ENCODE measurements at regions of chr20 and their contacts with region 1.

Region 1: DNA sequence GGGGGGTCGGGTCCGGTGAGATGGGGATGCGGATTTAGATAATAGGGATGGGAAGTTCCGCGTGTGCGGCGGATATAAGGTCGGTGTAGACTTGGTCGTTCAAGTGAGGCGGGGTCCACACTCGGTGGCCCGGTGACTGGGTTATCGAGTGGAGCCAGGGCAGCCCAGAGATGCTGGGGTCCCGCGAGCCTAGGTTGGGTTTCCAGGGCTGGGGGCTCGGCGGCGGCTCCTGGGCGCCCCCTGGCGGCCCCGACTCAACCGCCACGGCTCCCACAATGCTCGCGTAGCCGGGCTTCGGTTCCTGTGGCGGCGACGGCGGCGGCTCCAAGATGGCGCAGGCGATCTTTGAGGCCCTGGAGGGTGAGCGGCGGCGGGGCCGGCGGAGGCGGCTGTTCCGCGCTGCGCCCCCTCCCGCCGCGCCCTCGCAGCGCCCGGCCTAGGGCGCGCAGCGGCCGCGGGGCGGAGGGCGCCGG is at the start of gene ZNF341:
- DNase-seq: peak; percentile 81 to 95 (median 89)
- ATAC-seq: peak; percentile 85
- H3K4me3 ChIP-seq: peak within 1 kb of the TSS; percentile 67 to 79
- H3K4me3 Mint-ChIP-seq: peak within 1 kb of the TSS; percentile 88
- H3K27ac ChIP-seq: peak within 1 kb of the TSS; percentile 60 to 81
- H3K27ac Mint-ChIP-seq: peak within 1 kb of the TSS; percentile 92
- H3K4me1 ChIP-seq: peaks cover 12% of the 10 kb centered on the region
- H3K4me1 Mint-ChIP-seq: peaks cover 20% of the 10 kb centered on the region
- H3K27me3 ChIP-seq: no peaks in the 10 kb centered on the region
- H3K27me3 Mint-ChIP-seq: no peaks in the 10 kb centered on the region
- CTCF ChIP-seq: peak; percentile 67
- total RNA-seq, gene ZNF341: 2.4 to 2.9 TPM

Region 2: GRCh38 chr20:33401184-33401920 is 330.4 kb before region 1 on chr20 and contains the start of gene CDK5RAP1:
- CTCF ChIA-PET with region 1: no interaction called
- POLR2A ChIA-PET with region 1: no interaction called
- intact Hi-C with region 1: loop called (anchors 1 to 5 kb)
- DNase-seq: peak; percentile 71 to 93 (median 85)
- ATAC-seq: peak; percentile 96
- H3K4me3 ChIP-seq: peak within 1 kb of the TSS; percentile 66 to 67
- H3K4me3 Mint-ChIP-seq: peak within 1 kb of the TSS; percentile 97
- H3K27ac ChIP-seq: peak within 1 kb of the TSS; percentile 56 to 64
- H3K27ac Mint-ChIP-seq: peak within 1 kb of the TSS; percentile 93
- H3K4me1 ChIP-seq: peaks cover 26% of the 10 kb centered on the region
- H3K4me1 Mint-ChIP-seq: peaks cover 55% of the 10 kb centered on the region
- H3K27me3 ChIP-seq: no peaks in the 10 kb centered on the region
- H3K27me3 Mint-ChIP-seq: no peaks in the 10 kb centered on the region
- CTCF ChIP-seq: no peak
- total RNA-seq, gene CDK5RAP1: 60.7 to 69.9 TPM

Region 3: DNA sequence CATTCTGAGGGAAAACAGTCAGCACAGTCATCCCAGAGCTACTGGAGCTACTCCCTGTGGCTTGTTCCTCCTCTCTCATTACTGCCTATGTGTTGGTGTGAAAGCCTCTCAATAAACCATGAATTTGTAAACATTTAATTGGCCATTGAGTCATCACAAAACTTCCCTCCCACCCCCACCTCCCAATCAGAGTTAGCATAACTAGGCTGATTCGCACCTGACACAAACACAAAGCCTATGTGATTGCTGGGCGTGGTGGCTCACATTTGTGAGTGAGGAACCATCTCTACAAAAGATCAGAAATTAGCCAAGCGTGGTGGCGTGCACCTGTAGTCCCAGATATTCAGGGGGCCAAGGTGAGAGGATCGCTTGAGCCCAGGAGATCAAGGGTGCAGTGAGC is 271.0 kb before region 1 on chr20:
- CTCF ChIA-PET with region 1: interaction called, 3 read pairs
- POLR2A ChIA-PET with region 1: no interaction called
- intact Hi-C with region 1: loop called in 1 of 2 experiments (anchors 1 kb)
- DNase-seq: no peak
- ATAC-seq: no peak
- H3K4me3 ChIP-seq: no peak overlapping the region
- H3K4me3 Mint-ChIP-seq: no peak overlapping the region
- H3K27ac ChIP-seq: no peak overlapping the region
- H3K27ac Mint-ChIP-seq: no peak overlapping the region
- H3K4me1 ChIP-seq: no peaks in the 10 kb centered on the region
- H3K4me1 Mint-ChIP-seq: no peaks in the 10 kb centered on the region
- H3K27me3 ChIP-seq: no peaks in the 10 kb centered on the region
- H3K27me3 Mint-ChIP-seq: no peaks in the 10 kb centered on the region
- CTCF ChIP-seq: no peak

Region 4: GRCh38 chr20:33554914-33555420 is 176.8 kb before region 1 on chr20:
- CTCF ChIA-PET with region 1: no interaction called
- POLR2A ChIA-PET with region 1: no interaction called
- intact Hi-C with region 1: loop called (anchors 1 to 2 kb)
- DNase-seq: peak in 6 of 9 experiments; percentile 3 to 95 (median 43)
- ATAC-seq: peak; percentile 95
- H3K4me3 ChIP-seq: peak overlapping the region; percentile 11 to 24
- H3K4me3 Mint-ChIP-seq: peak overlapping the region; percentile 72
- H3K27ac ChIP-seq: peak overlapping the region; percentile 62 to 92
- H3K27ac Mint-ChIP-seq: peak overlapping the region; percentile 96
- H3K4me1 ChIP-seq: peaks cover 14% of the 10 kb centered on the region
- H3K4me1 Mint-ChIP-seq: peaks cover 28% of the 10 kb centered on the region
- H3K27me3 ChIP-seq: no peaks in the 10 kb centered on the region
- H3K27me3 Mint-ChIP-seq: no peaks in the 10 kb centered on the region
- CTCF ChIP-seq: no peak

Region 5: DNA sequence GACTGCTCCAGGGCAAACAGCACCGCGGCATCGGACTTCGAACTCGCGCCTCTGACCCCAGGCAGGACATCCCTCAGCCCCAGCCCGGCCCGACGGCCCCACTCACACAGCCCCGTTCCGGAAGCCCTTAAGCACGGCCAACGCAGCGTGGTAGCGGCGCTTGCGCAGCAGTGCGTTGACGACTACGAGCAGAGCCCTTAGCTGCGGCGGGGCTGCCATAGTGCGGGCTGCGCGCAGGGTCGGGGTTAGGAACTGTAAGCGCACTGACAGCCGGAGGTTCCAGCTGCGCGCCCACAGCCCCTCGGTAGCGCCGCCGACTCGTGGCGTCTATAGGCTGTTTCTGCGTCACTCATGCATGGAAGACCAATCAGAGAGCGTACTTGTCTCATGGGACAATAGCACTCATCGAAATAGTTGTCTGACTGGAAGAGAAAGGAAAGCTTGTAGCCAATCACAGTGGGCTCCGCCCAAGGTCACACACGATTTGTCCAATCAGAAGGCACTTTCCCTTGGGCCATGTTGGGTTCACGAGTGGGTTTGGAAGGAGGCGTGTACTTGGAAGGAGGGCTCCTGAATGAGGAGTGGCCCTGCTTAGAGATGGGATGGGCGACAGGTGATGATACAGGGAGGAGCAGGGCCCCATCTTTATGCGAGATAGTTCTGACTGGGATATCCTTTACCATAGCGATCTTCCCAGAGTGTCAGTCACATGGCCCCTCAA is 11.6 kb before region 1 on chr20 and contains the start of gene PXMP4:
- CTCF ChIA-PET with region 1: interaction called, 13 read pairs
- POLR2A ChIA-PET with region 1: interaction called, 37 read pairs
- intact Hi-C with region 1: loop called (anchors 1 kb)
- DNase-seq: peak; percentile 71 to 97 (median 84)
- ATAC-seq: peak; percentile 94
- H3K4me3 ChIP-seq: peak within 1 kb of the TSS; percentile 72 to 95
- H3K4me3 Mint-ChIP-seq: peak within 1 kb of the TSS; percentile 86
- H3K27ac ChIP-seq: peak within 1 kb of the TSS; percentile 68 to 78
- H3K27ac Mint-ChIP-seq: peak within 1 kb of the TSS; percentile 91
- H3K4me1 ChIP-seq: peaks cover 16% of the 10 kb centered on the region
- H3K4me1 Mint-ChIP-seq: peaks cover 29% of the 10 kb centered on the region
- H3K27me3 ChIP-seq: no peaks in the 10 kb centered on the region
- H3K27me3 Mint-ChIP-seq: no peaks in the 10 kb centered on the region
- CTCF ChIP-seq: no peak
- total RNA-seq, gene PXMP4: 2.7 to 2.8 TPM

Region 6: DNA sequence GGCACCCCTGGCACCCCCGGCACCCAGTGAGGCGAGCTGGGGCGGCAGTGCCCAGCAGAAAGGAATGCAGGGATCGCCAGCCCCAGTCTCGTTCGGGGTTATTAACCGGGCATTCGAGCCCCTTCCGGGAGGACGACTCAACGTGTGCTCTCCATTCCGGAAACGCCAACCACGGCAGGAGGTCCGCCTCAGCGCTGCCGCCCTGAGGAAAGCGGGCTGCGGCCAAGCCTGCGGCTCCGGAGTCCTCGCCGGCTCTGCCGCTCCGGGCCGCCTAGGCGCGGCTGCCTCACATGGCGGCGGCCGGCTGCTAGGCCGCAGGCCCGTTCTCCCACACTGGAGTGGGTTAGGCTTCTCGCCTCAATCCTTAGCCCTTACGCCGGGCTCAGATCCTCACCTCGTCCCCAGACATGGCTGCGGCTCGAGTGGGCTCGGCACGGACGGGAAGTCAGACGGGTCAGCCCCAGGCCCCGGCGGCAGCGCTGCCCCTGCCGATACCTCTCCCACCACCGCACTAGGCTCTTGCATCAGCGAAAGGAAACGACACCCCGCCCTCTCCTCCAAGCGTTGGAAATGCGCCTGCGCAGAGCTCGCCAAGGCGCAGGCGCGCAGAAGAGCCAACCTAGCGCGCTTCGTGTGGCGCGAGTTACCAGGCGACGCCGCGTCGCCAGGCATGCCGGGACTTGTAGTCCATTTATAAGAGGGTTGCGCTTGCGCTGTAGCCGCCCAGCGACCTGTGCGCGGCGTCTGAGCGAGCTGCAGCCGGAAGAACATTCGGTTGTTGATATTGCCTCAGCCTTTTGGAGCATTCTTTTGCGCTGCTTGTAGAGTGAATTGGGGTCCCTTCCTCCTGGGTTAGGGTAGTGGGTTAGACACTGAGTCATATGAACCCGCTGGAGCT is 380.2 kb after region 1 on chr20 and contains the start of gene EIF2S2:
- CTCF ChIA-PET with region 1: no interaction called
- POLR2A ChIA-PET with region 1: interaction called, 11 read pairs
- intact Hi-C with region 1: loop called in 1 of 2 experiments (anchors 2 kb)
- DNase-seq: peak; percentile 91 to 99 (median 95)
- ATAC-seq: peak; percentile 89
- H3K4me3 ChIP-seq: peak within 1 kb of the TSS; percentile 81 to 86
- H3K4me3 Mint-ChIP-seq: peak within 1 kb of the TSS; percentile 96
- H3K27ac ChIP-seq: peak within 1 kb of the TSS; percentile 89 to 93
- H3K27ac Mint-ChIP-seq: peak within 1 kb of the TSS; percentile 98
- H3K4me1 ChIP-seq: peaks cover 34% of the 10 kb centered on the region
- H3K4me1 Mint-ChIP-seq: peaks cover 42% of the 10 kb centered on the region
- H3K27me3 ChIP-seq: no peaks in the 10 kb centered on the region
- H3K27me3 Mint-ChIP-seq: no peaks in the 10 kb centered on the region
- CTCF ChIP-seq: no peak
- total RNA-seq, gene EIF2S2: 19.4 to 19.6 TPM

Measured in CD8-positive, alpha-beta T cell (primary cell).